Posterior vena cava (tissue), 2 donors: ENCODE measurements at regions of chr17 and their contacts with region 1.

Region 1: GRCh38 chr17:57955183-57955931 is at the start of gene CUEDC1:
- DNase-seq: peak; percentile 95
- total RNA-seq, gene CUEDC1: 42.3 to 43.6 TPM

Region 2: DNA sequence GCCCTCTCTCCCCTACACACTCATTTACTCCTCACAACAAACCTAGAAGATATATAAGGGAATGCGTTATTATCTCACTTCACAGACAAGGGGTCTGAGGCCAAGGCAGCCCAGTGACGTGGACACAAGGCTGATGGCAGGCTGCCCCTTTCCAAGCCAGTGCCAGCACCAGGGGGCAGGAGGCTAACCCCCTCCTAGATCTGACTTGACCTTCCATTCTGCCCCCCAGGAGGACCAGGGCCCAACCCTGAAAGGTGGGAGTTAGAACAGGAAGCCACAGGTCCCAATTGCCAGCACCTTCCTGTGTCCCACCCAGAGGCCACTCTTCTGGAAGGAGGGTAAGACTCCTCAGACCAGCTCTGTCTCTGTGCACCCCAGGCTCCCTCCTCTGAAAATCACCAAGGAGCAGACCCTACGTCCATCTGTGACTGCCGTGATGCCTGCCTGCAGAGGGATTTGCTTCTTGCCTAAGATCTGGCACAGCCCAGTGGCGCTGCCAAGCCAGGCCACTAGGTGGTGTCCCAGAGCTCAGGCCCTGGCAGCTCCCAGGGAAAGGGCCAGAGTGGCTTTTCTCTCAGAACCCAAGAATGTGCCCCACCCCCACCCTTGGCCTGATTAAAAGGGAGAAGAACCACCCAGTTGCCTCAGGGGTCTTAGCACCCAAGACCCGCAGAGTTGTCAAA is 63.1 kb before region 1 on chr17:
- intact Hi-C with region 1: loop called (anchors 5 to 10 kb)
- DNase-seq: peak; percentile 96

Region 3: DNA sequence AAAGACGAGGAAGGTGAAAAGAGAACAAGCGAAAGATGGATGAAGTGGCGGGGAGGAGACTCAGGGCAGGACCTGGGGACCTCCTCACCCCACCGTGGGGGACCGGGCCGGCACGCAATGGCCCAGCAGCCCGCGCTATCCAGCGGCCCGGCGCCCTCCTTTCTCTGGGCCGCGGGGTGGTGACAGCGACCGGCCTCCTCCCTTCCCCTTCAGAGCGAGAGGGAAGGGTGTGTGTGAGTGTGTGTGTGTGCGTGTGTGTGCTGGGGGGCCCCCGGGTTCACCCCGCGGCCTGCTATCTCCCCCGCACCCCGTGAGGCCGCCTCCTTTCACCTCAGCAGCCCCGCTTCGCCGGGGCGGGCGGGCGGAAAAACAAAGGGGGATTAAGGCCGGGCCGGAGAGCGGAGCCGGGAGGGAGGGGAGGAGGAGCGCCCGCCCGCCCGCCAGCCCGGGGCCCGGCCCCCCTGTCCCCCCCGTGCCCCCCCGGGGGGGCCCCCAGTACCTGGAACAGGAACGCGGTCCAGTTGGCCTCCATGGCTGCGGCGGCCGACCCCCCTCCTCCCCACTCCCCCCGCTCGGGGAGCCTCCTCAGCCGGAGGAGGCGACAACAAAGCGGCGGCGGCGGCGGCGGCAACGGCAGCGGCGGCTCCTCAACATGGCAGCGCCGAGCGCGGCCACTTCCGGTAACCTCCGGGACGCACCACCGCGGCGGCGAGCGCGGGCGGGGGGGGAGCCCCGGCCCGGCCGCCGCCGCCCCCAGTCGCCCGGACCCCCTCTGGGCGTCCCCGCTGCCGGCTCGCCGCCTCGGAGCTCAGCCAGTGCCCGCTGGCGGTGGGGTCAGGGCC is 32.4 kb after region 1 on chr17 and contains the start of gene VEZF1:
- intact Hi-C with region 1: loop called in 1 of 2 experiments (anchors 5 kb)
- DNase-seq: peak; percentile 94
- total RNA-seq, gene VEZF1: 56.1 to 61.8 TPM

Region 4: DNA sequence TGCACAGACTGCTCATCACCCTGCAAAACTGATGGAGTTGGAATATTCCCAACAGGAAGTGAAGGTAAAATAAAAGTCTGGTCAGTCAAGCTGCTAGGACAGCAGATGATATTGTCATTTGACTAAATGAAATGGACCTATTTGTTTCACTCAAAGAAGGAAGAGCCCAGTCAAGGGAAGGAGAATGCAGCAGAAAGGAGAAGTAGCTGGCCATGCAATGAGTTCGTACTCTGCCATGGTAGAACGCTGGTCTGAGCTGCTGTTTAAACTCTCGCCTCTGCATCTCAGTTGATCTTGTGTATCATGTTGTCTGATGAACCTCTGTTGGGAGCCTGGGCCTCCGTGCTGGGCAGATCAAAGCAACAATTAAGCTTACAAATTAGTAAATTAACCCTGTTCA is 1360.5 kb after region 1 on chr17:
- intact Hi-C with region 1: no loop called
- DNase-seq: no peak